ENCODE measurements at regions of chrX and their contacts with region 1.

Region 1: GRCh38 chrX:153947009-153947769 is 2.7 kb upstream of the RENBP start:
- DNase-seq: peak; percentile 77 to 82 (median 80)
- H3K4me3 ChIP-seq: no peak overlapping the region
- H3K4me3 Mint-ChIP-seq: no peak overlapping the region
- H3K27ac ChIP-seq: peak overlapping the region; percentile 9
- H3K27ac Mint-ChIP-seq: peak overlapping the region in 6 of 7 donors; percentile 40 to 91 (median 68)
- H3K4me1 ChIP-seq: peaks cover 20% of the 10 kb centered on the region
- H3K4me1 Mint-ChIP-seq: peaks cover 5 to 16% (median 6%) of the 10 kb centered on the region in 4 donors
- H3K27me3 ChIP-seq: no peaks in the 10 kb centered on the region
- H3K27me3 Mint-ChIP-seq: no peaks in the 10 kb centered on the region

Region 2: DNA sequence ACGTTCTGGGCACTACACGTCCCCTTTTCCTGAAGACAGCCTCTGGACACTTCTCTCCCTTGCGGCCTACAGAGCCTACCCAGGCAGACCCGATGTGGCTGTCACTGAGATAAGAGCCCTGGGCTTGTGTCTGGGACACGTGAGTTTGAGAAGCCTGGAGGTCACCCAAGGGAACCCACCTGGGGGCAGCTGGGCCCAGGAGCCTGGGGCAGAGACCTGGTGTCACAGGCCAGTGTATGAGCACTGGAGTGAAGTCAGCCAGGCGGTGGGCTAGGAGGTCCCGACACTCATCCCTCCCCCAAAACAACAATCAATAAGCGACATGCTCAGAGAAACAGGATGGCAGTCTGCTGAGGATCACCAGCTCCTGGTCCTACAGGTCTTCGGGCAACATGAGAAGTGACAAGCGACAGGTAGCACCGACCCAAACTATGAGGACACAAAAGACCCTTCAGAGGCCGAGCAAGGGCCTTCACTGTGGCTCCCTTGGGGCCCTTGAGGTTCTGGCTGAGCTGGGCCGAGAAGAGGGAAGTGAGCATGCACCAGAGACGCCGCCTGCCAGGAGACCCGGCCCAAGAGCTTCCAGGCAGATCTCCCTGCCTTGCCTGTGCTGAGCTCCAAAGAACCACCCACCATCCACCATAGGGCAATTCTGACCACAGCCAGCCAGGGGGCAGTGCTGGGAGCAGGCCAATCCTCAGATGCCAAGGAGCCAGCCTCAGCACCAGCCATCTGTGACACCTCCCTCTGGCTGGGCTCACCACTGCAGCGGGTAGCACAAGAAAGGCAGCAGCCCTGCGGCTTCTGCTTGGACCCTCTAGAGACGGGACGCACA is 311.2 kb before region 1 on chrX:
- CTCF ChIA-PET with region 1: no interaction called
- POLR2A ChIA-PET with region 1: no interaction called
- intact Hi-C with region 1: no loop called
- DNase-seq: no peak
- H3K4me3 ChIP-seq: no peak overlapping the region
- H3K4me3 Mint-ChIP-seq: no peak overlapping the region
- H3K27ac ChIP-seq: no peak overlapping the region
- H3K27ac Mint-ChIP-seq: no peak overlapping the region
- H3K4me1 ChIP-seq: no peaks in the 10 kb centered on the region
- H3K4me1 Mint-ChIP-seq: peaks cover 0 to 4% (median 0%) of the 10 kb centered on the region in 4 donors
- H3K27me3 ChIP-seq: no peaks in the 10 kb centered on the region
- H3K27me3 Mint-ChIP-seq: peaks cover 0 to 4% of the 10 kb centered on the region in 2 donors

Region 3: DNA sequence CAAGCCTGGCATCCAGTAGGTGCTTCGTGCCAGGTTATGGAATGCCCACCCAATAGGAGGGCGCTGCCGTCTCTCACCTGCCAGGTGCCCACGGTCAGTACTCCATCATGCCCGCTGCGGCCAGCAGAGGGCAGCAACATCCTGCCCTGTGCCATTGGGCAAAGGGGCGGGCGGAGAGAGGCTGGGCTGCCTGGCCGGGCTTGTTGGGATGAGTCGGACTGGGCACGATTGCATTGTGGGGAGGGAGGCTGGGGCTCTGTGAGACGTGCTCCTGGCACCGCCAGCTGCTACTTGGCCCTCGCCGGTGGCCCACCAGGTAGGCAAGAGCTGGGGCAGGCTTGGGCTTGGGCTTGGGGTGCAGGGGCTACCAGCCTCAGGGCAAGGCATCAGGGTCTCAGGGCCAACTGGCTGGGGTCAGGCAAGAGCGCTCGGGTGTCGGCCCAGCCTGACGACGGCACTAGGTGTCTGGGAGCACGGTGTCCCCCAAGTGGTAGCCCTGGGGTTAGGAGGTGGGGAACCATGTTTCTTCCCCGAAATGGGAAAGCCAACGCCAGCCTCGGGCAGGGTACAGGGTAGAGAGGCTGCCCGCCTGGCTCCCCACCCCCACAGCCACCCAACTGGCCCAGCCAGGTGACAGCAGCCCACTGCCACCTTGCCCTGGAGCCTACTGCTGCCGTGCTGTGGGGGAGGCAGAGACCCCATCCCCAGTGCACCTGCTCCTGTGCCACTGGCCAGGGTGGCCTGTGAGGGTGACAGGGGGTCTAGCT is 183.0 kb before region 1 on chrX and contains the start of gene PLXNB3:
- CTCF ChIA-PET with region 1: interaction called, 28 read pairs
- POLR2A ChIA-PET with region 1: interaction called, 4 read pairs
- intact Hi-C with region 1: loop called (anchors 1 kb)
- DNase-seq: peak; percentile 56 to 76 (median 69)
- H3K4me3 ChIP-seq: no peak within 1 kb of the TSS
- H3K4me3 Mint-ChIP-seq: no peak within 1 kb of the TSS
- H3K27ac ChIP-seq: no peak within 1 kb of the TSS
- H3K27ac Mint-ChIP-seq: peak within 1 kb of the TSS in 1 of 7 donors; percentile 42
- H3K4me1 ChIP-seq: no peaks in the 10 kb centered on the region
- H3K4me1 Mint-ChIP-seq: peaks cover 4 to 10% (median 7%) of the 10 kb centered on the region in 4 donors
- H3K27me3 ChIP-seq: no peaks in the 10 kb centered on the region
- H3K27me3 Mint-ChIP-seq: no peaks in the 10 kb centered on the region
- total RNA-seq, gene PLXNB3: not detected

Region 4: DNA sequence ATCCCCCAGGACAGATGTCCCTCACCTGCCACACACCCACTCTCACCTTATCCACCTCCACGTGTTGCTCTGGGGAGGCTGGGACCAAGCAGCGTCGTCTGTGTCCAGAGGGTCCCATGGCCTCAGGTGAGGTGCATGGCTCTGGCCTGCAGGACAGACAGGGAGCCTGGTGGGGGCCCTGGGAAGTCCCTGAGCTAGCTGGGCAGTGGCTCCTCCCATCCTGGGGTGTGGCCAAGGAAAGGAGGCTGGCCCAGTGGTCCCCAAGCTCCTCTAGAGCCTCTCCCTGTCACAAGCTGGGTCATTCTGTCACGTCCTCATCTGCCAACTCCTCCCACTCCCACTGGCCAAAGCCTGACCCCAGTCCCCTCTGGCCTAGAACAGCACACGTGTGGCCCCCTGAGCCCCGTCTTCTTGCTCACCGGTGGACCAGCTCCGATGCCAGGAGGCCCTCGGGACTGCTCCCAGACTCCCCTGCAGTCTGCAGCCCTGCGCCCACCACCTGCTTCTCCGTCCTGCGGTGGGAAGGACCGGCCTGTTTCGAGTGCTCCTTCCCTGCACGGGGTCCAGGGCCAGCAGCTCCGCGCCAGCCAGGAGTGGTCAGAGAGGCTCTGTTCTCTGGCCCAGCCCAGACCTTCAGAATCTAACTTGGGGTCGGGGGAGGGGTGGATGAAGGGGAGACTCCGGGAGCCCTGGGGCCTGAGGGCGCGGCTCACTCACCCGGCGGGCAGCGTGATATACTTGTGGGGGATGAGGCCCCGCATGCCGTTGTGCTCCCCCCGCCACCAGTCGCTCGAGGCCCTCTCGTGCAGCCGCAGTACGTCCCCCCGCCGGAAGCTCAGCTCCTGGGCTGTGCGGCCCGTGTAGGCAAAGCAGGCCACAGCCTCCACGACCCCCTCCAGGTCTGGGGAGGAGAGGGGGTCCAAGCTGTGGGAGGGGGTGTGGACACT is 37.9 kb before region 1 on chrX:
- CTCF ChIA-PET with region 1: interaction called, 12 read pairs
- POLR2A ChIA-PET with region 1: interaction called, 4 read pairs
- intact Hi-C with region 1: loop called (anchors 5 kb)
- DNase-seq: no peak
- H3K4me3 ChIP-seq: no peak overlapping the region
- H3K4me3 Mint-ChIP-seq: no peak overlapping the region
- H3K27ac ChIP-seq: no peak overlapping the region
- H3K27ac Mint-ChIP-seq: no peak overlapping the region
- H3K4me1 ChIP-seq: peaks cover 16% of the 10 kb centered on the region
- H3K4me1 Mint-ChIP-seq: peaks cover 7 to 22% (median 12%) of the 10 kb centered on the region in 4 donors
- H3K27me3 ChIP-seq: no peaks in the 10 kb centered on the region
- H3K27me3 Mint-ChIP-seq: no peaks in the 10 kb centered on the region

Region 5: GRCh38 chrX:153917861-153918260 is 29.3 kb before region 1 on chrX:
- CTCF ChIA-PET with region 1: interaction called, 290 read pairs
- POLR2A ChIA-PET with region 1: interaction called, 447 read pairs
- intact Hi-C with region 1: no loop called
- DNase-seq: no peak
- H3K4me3 ChIP-seq: no peak overlapping the region
- H3K4me3 Mint-ChIP-seq: peak overlapping the region in 1 of 8 donors; percentile 17
- H3K27ac ChIP-seq: no peak overlapping the region
- H3K27ac Mint-ChIP-seq: peak overlapping the region in 2 of 7 donors; percentile 60 to 79
- H3K4me1 ChIP-seq: peaks cover 20% of the 10 kb centered on the region
- H3K4me1 Mint-ChIP-seq: peaks cover 9 to 23% (median 11%) of the 10 kb centered on the region in 4 donors
- H3K27me3 ChIP-seq: no peaks in the 10 kb centered on the region
- H3K27me3 Mint-ChIP-seq: no peaks in the 10 kb centered on the region

Region 6: GRCh38 chrX:153934473-153935325 is 12.5 kb before region 1 on chrX and contains the start of gene NAA10:
- CTCF ChIA-PET with region 1: interaction called, 290 read pairs
- POLR2A ChIA-PET with region 1: interaction called, 447 read pairs
- intact Hi-C with region 1: no loop called
- DNase-seq: peak; percentile 37 to 58 (median 47)
- H3K4me3 ChIP-seq: peak within 1 kb of the TSS; percentile 17 to 38
- H3K4me3 Mint-ChIP-seq: peak within 1 kb of the TSS; percentile 84 to 91 (median 90)
- H3K27ac ChIP-seq: peak within 1 kb of the TSS; percentile 51
- H3K27ac Mint-ChIP-seq: peak within 1 kb of the TSS; percentile 72 to 90 (median 81)
- H3K4me1 ChIP-seq: peaks cover 5% of the 10 kb centered on the region
- H3K4me1 Mint-ChIP-seq: peaks cover 8 to 32% (median 22%) of the 10 kb centered on the region in 4 donors
- H3K27me3 ChIP-seq: no peaks in the 10 kb centered on the region
- H3K27me3 Mint-ChIP-seq: no peaks in the 10 kb centered on the region
- total RNA-seq, gene NAA10: 88.9 to 94.9 TPM